Adrenal gland (tissue), 19 donors: ENCODE measurements at regions of chr20 and their contacts with region 1.

Region 1: GRCh38 chr20:20658871-20659431 is 53.5 kb downstream of the RALGAPA2 start:
- DNase-seq: no peak
- H3K4me3 ChIP-seq: no peak overlapping the region
- H3K27ac ChIP-seq: no peak overlapping the region
- H3K4me1 ChIP-seq: peaks cover 0 to under 1% of the 10 kb centered on the region in 2 donors
- H3K27me3 ChIP-seq: no peaks in the 10 kb centered on the region
- CTCF ChIP-seq: no peak
- POLR2A ChIP-seq: no peak

Region 2: GRCh38 chr20:20712474-20713243 is 53.7 kb after region 1 on chr20 and contains the start of gene RALGAPA2:
- intact Hi-C with region 1: loop called in 1 of 2 experiments (anchors 10 kb)
- DNase-seq: peak; percentile 96 to 99 (median 99)
- H3K4me3 ChIP-seq: peak within 1 kb of the TSS; percentile 5 to 97 (median 60)
- H3K27ac ChIP-seq: peak within 1 kb of the TSS in 4 of 5 donors; percentile 79 to 95 (median 90)
- H3K4me1 ChIP-seq: peaks cover 19 to 27% of the 10 kb centered on the region in 2 donors
- H3K27me3 ChIP-seq: no peaks in the 10 kb centered on the region
- CTCF ChIP-seq: no peak
- POLR2A ChIP-seq: peak; percentile 12 to 66
- total RNA-seq, gene RALGAPA2: 15.8 to 39.6 (median 25.1) TPM

Region 3: GRCh38 chr20:20743511-20744169 is 84.7 kb after region 1 on chr20:
- intact Hi-C with region 1: no loop called
- DNase-seq: peak in 5 of 7 donors; percentile 21 to 62 (median 39)
- H3K4me3 ChIP-seq: no peak overlapping the region
- H3K27ac ChIP-seq: peak overlapping the region in 2 of 5 donors; percentile 77 to 81
- H3K4me1 ChIP-seq: no peaks in the 10 kb centered on the region
- H3K27me3 ChIP-seq: no peaks in the 10 kb centered on the region
- CTCF ChIP-seq: no peak
- POLR2A ChIP-seq: no peak